ENCODE measurements at regions of chr4 and their contacts with region 1.

Region 1: DNA sequence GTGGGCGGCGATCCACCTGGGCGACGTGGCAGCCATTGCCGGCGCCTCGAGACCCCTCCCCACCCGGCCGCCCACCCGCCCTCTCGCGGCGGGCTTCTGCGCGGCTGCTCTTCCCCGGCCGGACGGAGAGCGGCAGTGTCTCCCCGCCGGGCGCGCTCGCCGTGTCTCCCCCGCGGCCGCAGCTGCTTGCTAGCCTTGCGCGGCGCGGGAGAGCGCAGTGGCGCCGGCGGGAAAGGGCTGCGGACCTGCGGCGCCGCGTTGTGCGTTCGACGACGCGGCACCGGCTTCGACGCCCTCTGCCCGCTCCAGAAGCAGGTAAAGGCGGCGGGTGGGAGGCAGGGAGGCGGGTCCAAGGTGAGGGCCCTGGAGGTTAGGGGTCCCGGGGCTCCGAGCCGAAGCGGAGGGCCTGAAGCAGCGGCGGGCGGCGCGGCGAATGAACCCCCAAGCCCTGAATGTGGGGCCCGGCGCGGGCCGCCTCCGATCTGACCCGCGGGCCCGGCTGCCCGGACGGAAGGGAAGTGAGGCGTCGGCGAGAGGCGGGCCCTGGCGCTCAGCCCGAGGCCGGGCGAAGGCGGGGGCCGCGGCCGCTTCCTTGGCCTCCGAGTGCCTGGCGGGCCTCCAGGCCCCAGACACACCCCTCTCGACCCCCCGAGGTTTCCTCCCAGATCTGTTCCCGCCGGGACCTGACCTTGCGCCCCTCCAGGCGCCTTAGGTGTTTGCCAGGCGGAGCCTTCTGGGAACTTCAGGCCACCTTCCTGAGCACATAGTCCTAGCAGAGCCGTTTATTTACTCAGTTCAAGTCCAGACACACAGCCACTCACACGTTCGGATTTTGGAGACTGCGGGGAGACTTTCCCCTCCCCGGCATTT is at the start of gene N4BP2:
- DNase-seq: peak; percentile 68
- H3K4me3 Mint-ChIP-seq: peak within 1 kb of the TSS; percentile 96
- H3K27ac Mint-ChIP-seq: peak within 1 kb of the TSS; percentile 99
- H3K4me1 Mint-ChIP-seq: peaks cover 25% of the 10 kb centered on the region
- H3K27me3 Mint-ChIP-seq: no peaks in the 10 kb centered on the region
- total RNA-seq, gene N4BP2: 23.2 and 23.8 TPM in 2 replicates

Region 2: DNA sequence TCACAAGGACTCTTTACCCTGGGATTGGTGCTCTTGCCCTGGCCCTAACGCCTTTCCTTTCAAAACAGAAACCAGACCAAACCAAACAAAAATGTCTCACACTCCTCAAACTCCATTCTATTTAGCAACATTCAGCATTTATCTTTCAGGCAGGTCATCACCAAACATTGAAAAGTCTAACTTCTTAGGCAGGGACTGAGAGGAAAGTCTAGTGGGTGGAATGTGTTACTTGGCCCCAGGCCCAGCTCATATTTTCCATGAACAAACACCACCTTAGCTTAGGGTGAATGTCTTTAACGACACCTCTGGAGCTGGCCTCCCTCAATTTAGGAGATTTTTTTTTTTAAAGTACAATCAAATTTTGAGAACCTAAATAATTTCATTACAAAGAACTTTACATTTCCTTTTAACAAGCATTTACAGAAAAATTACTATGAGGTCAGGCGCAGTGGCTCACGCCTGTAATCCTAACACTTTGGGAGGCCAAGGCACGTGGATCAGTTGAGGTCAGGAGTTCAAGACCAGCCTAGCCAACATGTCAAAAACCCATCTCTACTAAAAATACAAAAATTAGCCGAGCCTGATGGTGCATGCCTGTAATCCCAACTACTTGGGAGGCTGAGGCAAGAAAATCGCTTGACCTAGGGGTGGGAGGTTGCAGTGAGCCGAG is 10.5 kb before region 1 on chr4:
- intact Hi-C with region 1: loop called (anchors 1 kb)
- DNase-seq: no peak
- H3K4me3 Mint-ChIP-seq: no peak overlapping the region
- H3K27ac Mint-ChIP-seq: peak overlapping the region; percentile 89
- H3K4me1 Mint-ChIP-seq: peaks cover 11% of the 10 kb centered on the region
- H3K27me3 Mint-ChIP-seq: no peaks in the 10 kb centered on the region

Region 3: DNA sequence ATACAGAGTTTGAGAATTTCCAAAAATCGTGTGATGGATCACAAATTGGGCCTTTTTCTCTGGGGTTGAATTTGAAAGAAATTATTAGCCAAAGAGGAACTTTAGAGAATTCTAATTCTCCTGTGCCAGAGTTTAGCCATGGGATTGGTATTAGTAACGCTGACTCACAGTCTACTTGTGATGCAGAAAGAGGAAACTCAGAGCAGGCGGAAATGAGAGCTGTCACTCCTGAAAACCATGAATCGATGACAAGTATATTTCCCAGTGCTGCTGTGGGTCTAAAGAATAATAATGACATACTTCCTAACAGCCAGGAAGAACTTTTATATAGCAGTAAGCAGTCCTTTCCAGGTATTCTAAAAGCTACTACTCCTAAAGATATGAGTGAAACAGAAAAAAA is 64.6 kb after region 1 on chr4:
- intact Hi-C with region 1: loop called (anchors 5 kb)
- DNase-seq: no peak
- H3K4me3 Mint-ChIP-seq: no peak overlapping the region
- H3K27ac Mint-ChIP-seq: peak overlapping the region; percentile 42
- H3K4me1 Mint-ChIP-seq: peaks cover 38% of the 10 kb centered on the region
- H3K27me3 Mint-ChIP-seq: no peaks in the 10 kb centered on the region

Region 4: GRCh38 chr4:40149960-40150385 is 93.0 kb after region 1 on chr4:
- intact Hi-C with region 1: loop called (anchors 2 kb)
- DNase-seq: peak; percentile 61
- H3K4me3 Mint-ChIP-seq: no peak overlapping the region
- H3K27ac Mint-ChIP-seq: peak overlapping the region; percentile 42
- H3K4me1 Mint-ChIP-seq: peaks cover 10% of the 10 kb centered on the region
- H3K27me3 Mint-ChIP-seq: no peaks in the 10 kb centered on the region

Region 5: GRCh38 chr4:40238700-40239548 is 182.0 kb after region 1 on chr4:
- intact Hi-C with region 1: loop called (anchors 1 kb)
- DNase-seq: peak; percentile 79
- H3K4me3 Mint-ChIP-seq: peak overlapping the region; percentile 77
- H3K27ac Mint-ChIP-seq: peak overlapping the region; percentile 94
- H3K4me1 Mint-ChIP-seq: peaks cover 74% of the 10 kb centered on the region
- H3K27me3 Mint-ChIP-seq: no peaks in the 10 kb centered on the region

Region 6: GRCh38 chr4:40309250-40309774 is 252.4 kb after region 1 on chr4:
- intact Hi-C with region 1: loop called (anchors 2 kb)
- DNase-seq: peak; percentile 82
- H3K4me3 Mint-ChIP-seq: peak overlapping the region; percentile 45
- H3K27ac Mint-ChIP-seq: peak overlapping the region; percentile 95
- H3K4me1 Mint-ChIP-seq: peaks cover 80% of the 10 kb centered on the region
- H3K27me3 Mint-ChIP-seq: no peaks in the 10 kb centered on the region